Natural killer cell (primary cell): ENCODE measurements at regions of chr16 and their contacts with region 1.

Region 1: DNA sequence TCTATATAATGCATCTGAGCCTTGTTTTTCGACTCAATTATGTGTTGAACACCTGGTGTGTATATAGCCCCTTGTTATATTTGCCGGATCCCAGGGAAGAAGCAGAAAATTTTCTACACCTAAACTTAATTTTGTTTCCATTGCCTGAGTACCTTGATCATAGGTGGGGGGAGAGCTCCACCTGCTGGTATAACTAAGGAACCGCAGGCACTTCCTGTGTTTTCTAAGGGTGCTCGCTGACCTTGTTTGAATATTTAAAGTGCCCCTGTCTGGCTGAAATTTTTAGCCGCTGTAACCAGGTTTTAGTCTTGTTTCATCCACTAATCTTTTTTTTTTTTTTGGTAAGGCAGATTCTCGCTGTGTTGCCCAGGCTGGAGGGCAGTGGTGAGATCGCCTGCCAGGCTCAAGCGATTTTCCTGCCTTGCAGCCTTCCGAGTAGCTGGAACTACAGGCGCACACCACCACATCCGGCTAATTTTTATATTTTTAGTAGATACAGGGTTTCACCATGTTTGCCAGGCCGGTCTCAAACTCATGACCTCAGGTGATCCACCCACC is 6.5 kb upstream of the NUBP1 start:
- DNase-seq: peak; percentile 50 to 90
- ATAC-seq: peak; percentile 93 to 99 (median 96)
- H3K4me3 ChIP-seq: peak overlapping the region; percentile 11
- H3K4me3 Mint-ChIP-seq: peak overlapping the region; percentile 62
- H3K27ac ChIP-seq: peak overlapping the region; percentile 37
- H3K27ac Mint-ChIP-seq: peak overlapping the region; percentile 51 to 56
- H3K4me1 ChIP-seq: peaks cover 20% of the 10 kb centered on the region
- H3K4me1 Mint-ChIP-seq: peaks cover 9 to 14% of the 10 kb centered on the region in 2 donors
- H3K27me3 ChIP-seq: no peaks in the 10 kb centered on the region
- H3K27me3 Mint-ChIP-seq: no peaks in the 10 kb centered on the region
- CTCF ChIP-seq: peak; percentile 89

Region 2: GRCh38 chr16:9159839-9160550 is 1577.2 kb before region 1 on chr16:
- intact Hi-C with region 1: loop called (anchors 2 kb)
- DNase-seq: peak; percentile 26 to 67
- ATAC-seq: peak in 1 of 3 donors; percentile 70
- H3K4me3 ChIP-seq: no peak overlapping the region
- H3K4me3 Mint-ChIP-seq: no peak overlapping the region
- H3K27ac ChIP-seq: no peak overlapping the region
- H3K27ac Mint-ChIP-seq: no peak overlapping the region
- H3K4me1 ChIP-seq: peaks cover 7% of the 10 kb centered on the region
- H3K4me1 Mint-ChIP-seq: peaks cover 8% of the 10 kb centered on the region in 2 donors
- H3K27me3 ChIP-seq: peaks cover 2% of the 10 kb centered on the region
- H3K27me3 Mint-ChIP-seq: peaks cover 0 to 6% of the 10 kb centered on the region in 2 donors
- CTCF ChIP-seq: peak; percentile 87

Region 3: DNA sequence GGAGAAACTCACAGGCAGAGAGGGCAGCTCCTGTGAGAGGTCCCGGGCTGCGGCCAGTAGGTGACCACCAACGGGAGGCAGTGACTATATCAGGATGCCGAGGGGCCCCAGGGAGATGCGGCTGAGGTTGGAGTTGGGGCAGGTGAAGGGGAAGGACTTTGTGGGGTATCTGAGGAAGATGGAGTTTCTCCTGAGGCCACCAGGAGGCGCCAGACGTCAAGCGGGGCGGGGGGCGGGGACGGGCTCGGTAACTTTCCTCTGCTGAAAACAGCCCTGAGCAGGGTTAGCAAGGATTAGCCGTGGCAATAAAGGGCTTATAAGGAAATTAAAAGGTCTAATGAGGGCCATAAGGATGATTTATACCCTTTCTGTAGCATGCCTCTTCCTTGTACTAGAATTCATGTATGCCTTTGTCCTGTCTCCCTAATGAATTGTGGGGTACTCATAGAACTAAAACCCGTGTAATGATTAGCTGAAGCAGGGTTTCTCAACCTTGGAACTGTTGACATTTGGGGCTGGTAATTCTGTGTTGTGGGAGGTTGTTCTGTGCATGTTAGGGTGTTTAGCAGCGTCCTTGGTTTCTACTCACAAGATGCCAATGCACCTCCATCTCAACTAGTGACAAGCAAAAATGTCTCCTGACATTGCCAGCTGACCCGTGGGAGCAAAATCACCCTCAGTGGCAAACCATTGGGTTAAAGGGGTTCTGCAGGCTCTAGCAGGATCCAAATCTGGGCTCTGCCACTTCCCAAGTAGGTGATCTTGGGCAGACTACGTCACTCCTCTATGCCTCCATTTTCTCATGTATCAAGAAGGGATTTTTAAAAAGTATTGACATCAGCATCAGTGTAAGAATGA is 480.1 kb before region 1 on chr16:
- intact Hi-C with region 1: loop called (anchors 2 kb)
- DNase-seq: peak; percentile 19 to 75
- ATAC-seq: peak; percentile 53 to 85 (median 68)
- H3K4me3 ChIP-seq: no peak overlapping the region
- H3K4me3 Mint-ChIP-seq: no peak overlapping the region
- H3K27ac ChIP-seq: no peak overlapping the region
- H3K27ac Mint-ChIP-seq: no peak overlapping the region
- H3K4me1 ChIP-seq: no peaks in the 10 kb centered on the region
- H3K4me1 Mint-ChIP-seq: peaks cover 0 to 6% of the 10 kb centered on the region in 2 donors
- H3K27me3 ChIP-seq: no peaks in the 10 kb centered on the region
- H3K27me3 Mint-ChIP-seq: peaks cover 2 to 7% of the 10 kb centered on the region in 2 donors
- CTCF ChIP-seq: peak; percentile 74

Region 4: DNA sequence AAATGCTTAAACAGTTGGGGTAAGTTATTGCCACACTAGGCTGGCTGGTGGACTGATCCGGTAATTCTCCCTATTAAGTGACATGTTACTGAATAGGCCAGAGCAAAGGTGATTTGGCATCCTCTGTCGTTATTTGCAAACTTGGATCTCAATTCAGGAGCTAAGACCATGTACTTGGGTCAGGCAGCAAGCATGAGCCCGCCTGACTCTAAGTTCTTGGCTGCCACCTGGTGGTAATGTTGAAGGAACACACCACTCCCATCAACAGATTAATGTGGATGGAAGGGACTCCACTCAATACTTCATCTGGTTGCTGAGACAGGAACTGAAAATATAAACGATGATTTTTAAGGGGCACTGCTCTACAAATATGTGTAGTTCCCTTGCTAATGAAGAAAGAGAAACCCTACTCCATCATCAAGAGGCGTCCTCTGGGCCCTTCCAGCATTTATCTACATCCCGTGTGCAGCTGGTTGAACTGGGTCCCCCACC is 227.6 kb before region 1 on chr16:
- intact Hi-C with region 1: loop called (anchors 1 kb)
- DNase-seq: peak; percentile 28 to 87
- ATAC-seq: peak; percentile 76 to 96 (median 94)
- H3K4me3 ChIP-seq: no peak overlapping the region
- H3K4me3 Mint-ChIP-seq: no peak overlapping the region
- H3K27ac ChIP-seq: no peak overlapping the region
- H3K27ac Mint-ChIP-seq: no peak overlapping the region
- H3K4me1 ChIP-seq: no peaks in the 10 kb centered on the region
- H3K4me1 Mint-ChIP-seq: no peaks in the 10 kb centered on the region
- H3K27me3 ChIP-seq: peaks cover 2% of the 10 kb centered on the region
- H3K27me3 Mint-ChIP-seq: no peaks in the 10 kb centered on the region
- CTCF ChIP-seq: peak; percentile 87

Region 5: DNA sequence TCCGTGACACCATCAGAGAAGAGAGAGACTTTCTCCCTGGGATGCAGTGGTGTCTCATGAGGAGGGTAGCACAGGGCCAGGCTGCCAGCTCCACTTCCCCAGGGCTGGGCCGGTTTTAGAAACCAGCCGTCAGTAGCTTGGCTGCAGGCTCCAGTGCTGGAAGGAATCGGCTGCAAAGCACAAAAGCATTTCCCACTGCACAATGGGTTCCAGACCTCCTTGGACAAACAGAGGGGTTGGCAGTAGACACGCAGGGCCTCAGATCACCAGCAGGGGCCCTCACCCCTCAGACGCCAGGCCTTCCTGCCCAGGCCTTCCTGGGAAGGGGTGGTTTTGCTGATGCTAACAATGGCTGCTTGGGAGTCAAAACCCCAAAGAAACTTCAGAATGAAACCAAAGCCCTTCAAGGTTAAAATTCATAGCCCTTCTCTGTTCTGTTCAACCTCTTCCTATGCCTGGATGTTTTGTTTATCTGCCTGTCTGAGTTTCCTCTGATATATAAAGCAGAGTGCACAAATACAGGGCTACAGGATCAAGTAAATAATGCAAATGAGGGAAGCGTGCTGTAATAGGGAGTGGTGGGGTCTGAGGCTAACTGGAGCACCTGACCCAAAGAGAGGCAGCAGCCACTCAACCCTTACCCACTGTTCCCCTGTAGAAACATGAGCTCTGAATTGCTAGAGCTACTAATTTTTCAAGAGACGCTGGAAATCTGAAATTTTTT is 68.7 kb before region 1 on chr16:
- intact Hi-C with region 1: loop called (anchors 5 kb)
- DNase-seq: peak in 1 of 2 donors; percentile 22
- ATAC-seq: no peak
- H3K4me3 ChIP-seq: no peak overlapping the region
- H3K4me3 Mint-ChIP-seq: no peak overlapping the region
- H3K27ac ChIP-seq: no peak overlapping the region
- H3K27ac Mint-ChIP-seq: no peak overlapping the region
- H3K4me1 ChIP-seq: no peaks in the 10 kb centered on the region
- H3K4me1 Mint-ChIP-seq: no peaks in the 10 kb centered on the region
- H3K27me3 ChIP-seq: no peaks in the 10 kb centered on the region
- H3K27me3 Mint-ChIP-seq: peaks cover 11 to 14% of the 10 kb centered on the region in 2 donors
- CTCF ChIP-seq: peak; percentile 39

Region 6: DNA sequence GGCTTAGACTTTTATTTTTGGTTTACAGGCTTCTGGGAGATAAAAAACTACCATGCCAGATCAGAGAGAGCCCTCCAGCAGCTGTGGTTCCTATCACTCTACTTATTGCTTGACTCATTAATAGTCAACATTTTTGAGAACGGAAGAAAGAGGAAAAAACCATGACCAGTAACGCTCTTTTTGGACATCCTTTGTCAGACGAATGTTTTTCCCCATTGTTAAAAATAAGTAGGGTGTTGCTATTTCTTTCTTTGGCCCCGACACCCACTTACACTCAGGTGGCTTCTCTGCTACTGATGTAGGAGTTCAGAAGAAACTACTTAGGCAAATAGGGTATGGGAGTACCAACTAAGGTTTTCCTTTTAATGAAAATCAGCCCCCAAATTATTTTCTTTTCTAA is 53.9 kb after region 1 on chr16:
- intact Hi-C with region 1: no loop called
- DNase-seq: no peak
- ATAC-seq: no peak
- H3K4me3 ChIP-seq: no peak overlapping the region
- H3K4me3 Mint-ChIP-seq: no peak overlapping the region
- H3K27ac ChIP-seq: no peak overlapping the region
- H3K27ac Mint-ChIP-seq: no peak overlapping the region
- H3K4me1 ChIP-seq: no peaks in the 10 kb centered on the region
- H3K4me1 Mint-ChIP-seq: no peaks in the 10 kb centered on the region
- H3K27me3 ChIP-seq: no peaks in the 10 kb centered on the region
- H3K27me3 Mint-ChIP-seq: no peaks in the 10 kb centered on the region
- CTCF ChIP-seq: no peak